Panc1 (cell line): ENCODE measurements at regions of chrX and their contacts with region 1.

Region 1: GRCh38 chrX:119753571-119754257 is 4.7 kb upstream of the SOWAHD start:
- DNase-seq: peak; percentile 27
- ATAC-seq: no peak
- H3K4me3 ChIP-seq: no peak overlapping the region
- H3K27ac ChIP-seq: no peak overlapping the region
- H3K4me1 ChIP-seq: peaks cover 7% of the 10 kb centered on the region
- H3K27me3 ChIP-seq: no peaks in the 10 kb centered on the region
- CTCF ChIP-seq: peak; percentile 81

Region 2: GRCh38 chrX:118884552-118885138 is 869.1 kb before region 1 on chrX:
- CTCF ChIA-PET with region 1: no interaction called
- POLR2A ChIA-PET with region 1: no interaction called
- in situ Hi-C with region 1: no loop called
- intact Hi-C with region 1: no loop called
- DNase-seq: no peak
- ATAC-seq: no peak
- H3K4me3 ChIP-seq: no peak overlapping the region
- H3K27ac ChIP-seq: no peak overlapping the region
- H3K4me1 ChIP-seq: no peaks in the 10 kb centered on the region
- H3K27me3 ChIP-seq: no peaks in the 10 kb centered on the region
- CTCF ChIP-seq: no peak

Region 3: DNA sequence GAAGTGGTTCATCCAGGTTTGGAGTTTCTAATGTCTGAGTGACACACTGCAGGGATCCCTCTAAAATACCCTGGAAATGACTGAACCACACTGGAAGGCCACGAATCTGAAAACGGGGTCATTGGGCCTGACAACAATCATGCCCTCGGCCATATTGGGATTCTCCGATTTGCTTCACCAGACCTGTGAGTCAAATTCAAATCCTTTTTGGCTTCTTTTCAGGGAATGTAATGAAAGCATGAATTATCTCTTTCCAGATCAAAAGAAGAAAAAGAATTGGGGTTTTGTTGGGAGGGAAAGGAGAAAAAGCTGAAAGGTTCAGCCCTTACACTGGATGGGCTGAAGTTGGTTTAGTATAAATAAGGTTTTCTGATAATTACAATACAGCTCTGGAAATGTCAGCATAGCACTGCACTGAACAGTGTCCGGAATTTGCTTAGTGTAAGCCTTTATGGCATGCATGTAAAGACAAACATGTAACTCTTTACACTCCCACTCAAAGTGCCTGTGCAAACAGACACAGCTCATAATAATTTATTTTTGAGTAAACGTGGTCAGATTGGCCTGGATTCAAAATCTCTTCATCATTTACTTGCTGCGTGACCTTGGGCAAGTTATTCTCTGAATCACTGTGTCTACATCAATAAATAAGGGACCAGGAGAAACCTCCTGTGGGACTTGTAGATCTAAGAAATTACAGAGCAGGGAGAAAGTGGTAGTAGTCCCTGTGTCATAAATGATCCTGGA is 659.5 kb before region 1 on chrX:
- CTCF ChIA-PET with region 1: no interaction called
- POLR2A ChIA-PET with region 1: no interaction called
- in situ Hi-C with region 1: no loop called
- intact Hi-C with region 1: no loop called
- DNase-seq: peak; percentile 8
- ATAC-seq: 0 out of 2 replicates have a peak, but pooled peaks have one; percentile 63
- H3K4me3 ChIP-seq: no peak overlapping the region
- H3K27ac ChIP-seq: no peak overlapping the region
- H3K4me1 ChIP-seq: no peaks in the 10 kb centered on the region
- H3K27me3 ChIP-seq: 0 out of 2 replicates have a peak, but pooled peaks cover 3% of the 10 kb centered on the region
- CTCF ChIP-seq: no peak

Region 4: GRCh38 chrX:119617517-119618164 is 136.1 kb before region 1 on chrX:
- CTCF ChIA-PET with region 1: no interaction called
- POLR2A ChIA-PET with region 1: no interaction called
- in situ Hi-C with region 1: no loop called
- intact Hi-C with region 1: loop called (anchors 10 kb)
- DNase-seq: no peak
- ATAC-seq: no peak
- H3K4me3 ChIP-seq: no peak overlapping the region
- H3K27ac ChIP-seq: no peak overlapping the region
- H3K4me1 ChIP-seq: peaks cover 2% of the 10 kb centered on the region
- H3K27me3 ChIP-seq: no peaks in the 10 kb centered on the region
- CTCF ChIP-seq: no peak

Region 5: GRCh38 chrX:119817130-119817690 is 63.5 kb after region 1 on chrX:
- CTCF ChIA-PET with region 1: no interaction called
- POLR2A ChIA-PET with region 1: no interaction called
- in situ Hi-C with region 1: no loop called
- intact Hi-C with region 1: no loop called
- DNase-seq: no peak
- ATAC-seq: no peak
- H3K4me3 ChIP-seq: no peak overlapping the region
- H3K27ac ChIP-seq: no peak overlapping the region
- H3K4me1 ChIP-seq: no peaks in the 10 kb centered on the region
- H3K27me3 ChIP-seq: no peaks in the 10 kb centered on the region
- CTCF ChIP-seq: no peak